ENCODE measurements at regions of chr12 and their contacts with region 1.

Region 1: GRCh38 chr12:34218165-34219045 is 196.1 kb downstream of the ALG10 start:
- DNase-seq: peak; percentile 41 to 78 (median 62)
- ATAC-seq: peak; percentile 75
- H3K4me3 ChIP-seq: peak overlapping the region; percentile 48 to 56
- H3K4me3 Mint-ChIP-seq: peak overlapping the region; percentile 84
- H3K27ac ChIP-seq: no peak overlapping the region
- H3K27ac Mint-ChIP-seq: peak overlapping the region; percentile 9
- H3K4me1 ChIP-seq: no peaks in the 10 kb centered on the region
- H3K4me1 Mint-ChIP-seq: peaks cover 9% of the 10 kb centered on the region
- H3K27me3 ChIP-seq: peaks cover 0 to 7% of the 10 kb centered on the region in 2 experiments
- H3K27me3 Mint-ChIP-seq: peaks cover 11% of the 10 kb centered on the region
- CTCF ChIP-seq: peak; percentile 93

Region 2: DNA sequence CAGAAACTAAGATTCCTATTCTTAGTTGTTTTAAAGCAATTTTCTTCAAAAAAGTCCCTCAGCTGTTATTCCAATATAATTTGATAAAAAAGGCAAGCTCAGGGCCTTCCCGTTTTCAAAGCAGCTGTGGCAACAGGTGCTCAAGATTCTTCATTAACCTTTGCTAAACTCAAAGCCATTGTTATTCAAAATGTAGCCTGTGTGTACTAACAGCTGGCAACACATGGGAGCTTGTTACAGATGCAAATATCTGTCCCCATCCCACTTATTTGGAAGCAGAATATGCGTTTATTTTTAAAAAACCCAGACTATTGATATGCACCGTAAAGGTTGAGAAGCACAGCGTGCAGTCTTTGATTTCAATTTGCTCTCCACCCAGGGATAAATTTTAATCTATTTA is 568.4 kb before region 1 on chr12:
- CTCF ChIA-PET with region 1: no interaction called
- POLR2A ChIA-PET with region 1: no interaction called
- intact Hi-C with region 1: no loop called
- DNase-seq: no peak
- ATAC-seq: no peak
- H3K4me3 ChIP-seq: no peak overlapping the region
- H3K4me3 Mint-ChIP-seq: no peak overlapping the region
- H3K27ac ChIP-seq: no peak overlapping the region
- H3K27ac Mint-ChIP-seq: no peak overlapping the region
- H3K4me1 ChIP-seq: no peaks in the 10 kb centered on the region
- H3K4me1 Mint-ChIP-seq: no peaks in the 10 kb centered on the region
- H3K27me3 ChIP-seq: no peaks in the 10 kb centered on the region
- H3K27me3 Mint-ChIP-seq: no peaks in the 10 kb centered on the region
- CTCF ChIP-seq: no peak

Region 3: DNA sequence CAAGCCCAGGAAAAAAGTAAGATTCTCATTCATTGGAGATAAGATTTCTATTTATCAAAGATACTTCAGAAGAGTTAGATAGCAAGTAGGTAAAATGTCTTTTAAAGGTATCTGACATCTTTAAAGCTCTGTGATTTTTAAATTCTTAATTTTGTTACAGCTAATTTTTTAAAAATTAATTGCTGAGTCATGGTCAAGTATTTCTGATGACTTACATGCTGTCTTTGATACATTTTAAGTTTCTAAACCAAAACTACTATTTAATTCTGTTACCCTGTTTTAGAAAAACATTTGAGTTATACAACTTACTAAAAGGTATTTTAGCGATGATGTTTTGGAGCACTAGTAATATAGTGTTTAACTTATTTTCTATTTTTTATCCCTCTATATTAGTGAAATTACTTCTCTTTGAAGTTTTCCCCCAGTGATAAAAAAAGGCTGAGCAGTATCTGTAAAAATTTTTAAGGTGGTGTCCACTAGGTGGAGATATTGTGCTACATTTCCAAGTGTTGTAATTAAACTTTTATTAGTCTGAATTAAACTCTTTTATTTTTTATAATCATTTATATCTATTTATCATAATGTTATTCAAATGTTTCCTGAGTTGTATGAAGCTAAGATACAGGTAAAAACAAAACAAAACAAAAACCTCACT is 184.7 kb before region 1 on chr12:
- CTCF ChIA-PET with region 1: no interaction called
- POLR2A ChIA-PET with region 1: no interaction called
- intact Hi-C with region 1: loop called (anchors 5 kb)
- DNase-seq: peak in 2 of 9 experiments; percentile 48 to 62
- ATAC-seq: no peak
- H3K4me3 ChIP-seq: no peak overlapping the region
- H3K4me3 Mint-ChIP-seq: no peak overlapping the region
- H3K27ac ChIP-seq: no peak overlapping the region
- H3K27ac Mint-ChIP-seq: no peak overlapping the region
- H3K4me1 ChIP-seq: no peaks in the 10 kb centered on the region
- H3K4me1 Mint-ChIP-seq: no peaks in the 10 kb centered on the region
- H3K27me3 ChIP-seq: no peaks in the 10 kb centered on the region
- H3K27me3 Mint-ChIP-seq: no peaks in the 10 kb centered on the region
- CTCF ChIP-seq: peak; percentile 77

Region 4: GRCh38 chr12:34122206-34122605 is 96.2 kb before region 1 on chr12:
- CTCF ChIA-PET with region 1: no interaction called
- POLR2A ChIA-PET with region 1: no interaction called
- intact Hi-C with region 1: loop called in 1 of 2 experiments (anchors 2 kb)
- DNase-seq: no peak
- ATAC-seq: no peak
- H3K4me3 ChIP-seq: no peak overlapping the region
- H3K4me3 Mint-ChIP-seq: no peak overlapping the region
- H3K27ac ChIP-seq: no peak overlapping the region
- H3K27ac Mint-ChIP-seq: no peak overlapping the region
- H3K4me1 ChIP-seq: peaks cover 6% of the 10 kb centered on the region
- H3K4me1 Mint-ChIP-seq: peaks cover 10% of the 10 kb centered on the region
- H3K27me3 ChIP-seq: peaks cover 0 to 3% of the 10 kb centered on the region in 2 experiments
- H3K27me3 Mint-ChIP-seq: peaks cover 8% of the 10 kb centered on the region
- CTCF ChIP-seq: no peak

Region 5: DNA sequence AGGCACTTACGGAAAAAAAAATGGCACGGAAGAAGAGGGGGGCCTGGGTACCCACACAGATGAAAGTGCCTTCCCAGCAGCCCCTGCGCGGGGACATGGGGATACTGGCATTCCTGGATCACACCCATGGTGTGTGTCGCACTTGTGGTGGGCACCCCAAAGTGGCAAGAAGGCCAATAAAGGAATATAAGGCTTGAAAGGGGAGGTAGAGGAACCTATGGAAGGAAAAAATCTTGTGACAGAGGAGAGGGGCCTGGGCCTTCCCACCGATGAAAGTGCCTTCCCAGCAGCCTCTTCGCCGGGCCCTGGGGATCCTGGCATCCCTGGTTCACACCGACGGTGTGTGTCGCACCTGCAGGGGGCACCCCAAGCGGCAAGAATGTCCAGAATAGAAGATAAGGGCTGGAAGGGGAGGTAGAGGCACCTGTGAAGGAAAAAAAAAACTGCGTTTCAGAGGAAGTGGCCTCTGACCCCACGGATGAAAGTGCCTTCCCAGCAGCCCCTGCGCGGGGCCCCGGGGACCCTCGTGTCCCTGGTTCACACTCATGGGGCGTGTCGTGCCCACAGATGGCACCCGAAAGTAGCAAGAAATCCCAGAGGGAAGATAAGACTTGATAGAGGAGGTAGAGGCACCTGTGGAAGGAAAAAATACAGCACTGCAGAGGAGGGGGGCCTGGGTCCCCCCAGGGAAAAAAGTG is 87.9 kb after region 1 on chr12:
- CTCF ChIA-PET with region 1: no interaction called
- POLR2A ChIA-PET with region 1: no interaction called
- intact Hi-C with region 1: no loop called
- DNase-seq: no peak
- ATAC-seq: no peak
- H3K4me3 ChIP-seq: no peak overlapping the region
- H3K4me3 Mint-ChIP-seq: no peak overlapping the region
- H3K27ac ChIP-seq: no peak overlapping the region
- H3K27ac Mint-ChIP-seq: no peak overlapping the region
- H3K4me1 ChIP-seq: no peaks in the 10 kb centered on the region
- H3K4me1 Mint-ChIP-seq: no peaks in the 10 kb centered on the region
- H3K27me3 ChIP-seq: no peaks in the 10 kb centered on the region
- H3K27me3 Mint-ChIP-seq: no peaks in the 10 kb centered on the region
- CTCF ChIP-seq: no peak

Measured in CD8-positive, alpha-beta T cell (primary cell).